CD8-positive, alpha-beta T cell (primary cell): ENCODE measurements at regions of chr2 and their contacts with region 1.

Region 1: GRCh38 chr2:176986487-176986886 is 226.1 kb upstream of the HNRNPA3 start:
- DNase-seq: no peak
- ATAC-seq: no peak
- H3K4me3 ChIP-seq: no peak overlapping the region
- H3K4me3 Mint-ChIP-seq: no peak overlapping the region
- H3K27ac ChIP-seq: no peak overlapping the region
- H3K27ac Mint-ChIP-seq: no peak overlapping the region
- H3K4me1 ChIP-seq: no peaks in the 10 kb centered on the region
- H3K4me1 Mint-ChIP-seq: no peaks in the 10 kb centered on the region
- H3K27me3 ChIP-seq: peaks cover 0 to 3% of the 10 kb centered on the region in 2 experiments
- H3K27me3 Mint-ChIP-seq: peaks cover 6% of the 10 kb centered on the region
- CTCF ChIP-seq: no peak

Region 2: GRCh38 chr2:177010861-177011260 is 24.4 kb after region 1 on chr2:
- CTCF ChIA-PET with region 1: no interaction called
- POLR2A ChIA-PET with region 1: no interaction called
- intact Hi-C with region 1: loop called in 1 of 2 experiments (anchors 2 kb)
- DNase-seq: no peak
- ATAC-seq: no peak
- H3K4me3 ChIP-seq: no peak overlapping the region
- H3K4me3 Mint-ChIP-seq: no peak overlapping the region
- H3K27ac ChIP-seq: no peak overlapping the region
- H3K27ac Mint-ChIP-seq: no peak overlapping the region
- H3K4me1 ChIP-seq: peaks cover 3% of the 10 kb centered on the region
- H3K4me1 Mint-ChIP-seq: peaks cover 5% of the 10 kb centered on the region
- H3K27me3 ChIP-seq: no peaks in the 10 kb centered on the region
- H3K27me3 Mint-ChIP-seq: peaks cover 11% of the 10 kb centered on the region
- CTCF ChIP-seq: no peak

Region 3: DNA sequence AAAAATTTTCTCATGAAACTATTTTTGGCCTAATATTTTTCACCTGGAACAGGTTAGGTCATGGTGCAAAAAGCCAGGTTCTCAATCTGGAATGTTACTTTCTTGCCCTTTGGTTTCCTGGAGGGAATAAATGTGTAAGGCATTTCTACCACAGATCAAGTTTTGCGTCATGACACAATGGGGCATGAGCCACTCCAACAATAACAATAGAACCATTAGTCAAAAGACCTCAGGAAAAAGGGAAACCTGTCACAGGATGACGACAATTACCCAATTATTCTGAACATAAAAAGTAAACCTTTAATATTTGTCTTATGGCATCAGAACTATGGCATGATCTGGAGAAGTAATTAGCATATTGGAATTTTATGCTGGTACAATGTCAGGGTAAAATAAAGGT is 137.9 kb after region 1 on chr2:
- CTCF ChIA-PET with region 1: no interaction called
- POLR2A ChIA-PET with region 1: no interaction called
- intact Hi-C with region 1: no loop called
- DNase-seq: no peak
- ATAC-seq: no peak
- H3K4me3 ChIP-seq: no peak overlapping the region
- H3K4me3 Mint-ChIP-seq: no peak overlapping the region
- H3K27ac ChIP-seq: no peak overlapping the region
- H3K27ac Mint-ChIP-seq: no peak overlapping the region
- H3K4me1 ChIP-seq: no peaks in the 10 kb centered on the region
- H3K4me1 Mint-ChIP-seq: peaks cover 2% of the 10 kb centered on the region
- H3K27me3 ChIP-seq: no peaks in the 10 kb centered on the region
- H3K27me3 Mint-ChIP-seq: peaks cover 2% of the 10 kb centered on the region
- CTCF ChIP-seq: no peak